ENCODE measurements at regions of chr11 and their contacts with region 1.

Region 1: GRCh38 chr11:101812546-101812945 is 102.3 kb upstream of the CEP126 start:
- DNase-seq: no peak
- H3K4me3 Mint-ChIP-seq: no peak overlapping the region
- H3K27ac Mint-ChIP-seq: no peak overlapping the region
- H3K4me1 Mint-ChIP-seq: no peaks in the 10 kb centered on the region
- H3K27me3 Mint-ChIP-seq: no peaks in the 10 kb centered on the region
- CTCF ChIP-seq: no peak

Region 2: DNA sequence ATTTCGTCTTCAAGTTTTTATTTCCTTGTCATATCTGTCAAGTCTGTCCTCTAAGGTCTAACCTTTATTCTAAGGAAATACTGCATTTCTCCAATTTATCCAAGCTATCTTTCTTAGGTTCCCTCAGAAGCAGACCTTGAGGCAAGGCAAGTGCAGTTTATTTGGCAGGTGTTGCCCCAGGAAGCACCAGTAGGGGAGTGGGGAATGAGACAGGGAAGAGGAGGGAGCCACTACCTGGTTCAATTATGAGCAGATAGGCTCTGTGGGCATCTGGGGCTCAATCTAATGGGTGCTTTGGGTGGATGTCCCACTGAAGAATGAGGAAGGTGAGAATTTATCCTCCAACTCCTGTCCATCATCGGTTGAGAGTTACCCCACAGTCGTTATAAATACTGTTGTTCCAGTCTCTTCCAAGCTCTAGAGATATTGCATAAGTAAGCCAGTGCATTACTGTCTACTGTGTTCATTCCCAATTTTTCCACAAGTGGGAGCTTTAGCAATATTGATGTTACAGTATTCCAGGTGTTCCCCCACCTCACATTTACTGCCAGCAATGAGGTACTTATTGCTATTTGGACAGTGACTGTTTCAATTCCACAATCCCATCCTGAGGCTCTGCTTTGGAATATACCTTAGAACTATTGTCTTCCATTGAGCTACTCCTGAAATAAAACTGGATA is 52.6 kb before region 1 on chr11:
- CTCF ChIA-PET with region 1: no interaction called
- intact Hi-C with region 1: loop called (anchors 5 kb)
- DNase-seq: no peak
- H3K4me3 Mint-ChIP-seq: no peak overlapping the region
- H3K27ac Mint-ChIP-seq: peak overlapping the region; percentile 37
- H3K4me1 Mint-ChIP-seq: peaks cover 27% of the 10 kb centered on the region
- H3K27me3 Mint-ChIP-seq: no peaks in the 10 kb centered on the region
- CTCF ChIP-seq: no peak